ENCODE measurements at regions of chr6 and their contacts with region 1.

Region 1: DNA sequence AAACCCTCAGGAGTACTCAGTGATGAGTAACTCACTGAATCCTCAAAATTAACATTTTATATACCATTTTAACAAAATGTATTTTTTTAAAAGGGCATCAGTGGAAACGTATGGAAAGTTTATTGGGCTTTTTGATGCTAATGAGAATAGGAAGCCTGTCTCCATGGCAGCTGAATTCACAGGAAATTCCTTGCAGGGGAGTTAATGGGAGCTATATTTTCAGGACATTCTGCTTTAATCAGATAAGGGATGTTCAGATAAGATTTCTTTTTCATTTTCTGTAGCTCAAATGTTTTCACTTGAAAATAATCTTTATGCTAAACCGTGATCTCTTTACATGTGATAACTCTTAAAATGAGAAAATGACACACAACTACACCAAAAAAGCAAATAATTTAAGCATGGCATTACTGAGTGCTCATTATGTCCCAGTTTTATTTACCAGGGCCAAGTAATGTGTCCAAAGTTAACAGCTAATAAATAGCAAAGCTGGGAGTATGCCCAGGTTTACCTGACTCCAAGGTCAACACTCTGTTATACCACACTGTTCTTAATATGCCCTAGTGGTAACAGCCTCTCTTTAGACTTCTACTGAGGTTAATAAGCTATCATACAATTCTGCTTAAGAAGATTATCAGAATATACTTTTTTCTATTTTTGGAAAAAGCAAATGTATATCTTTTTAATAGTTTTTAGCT is 348.1 kb downstream of the GRIK2 start:
- DNase-seq: peak; percentile 68
- H3K4me3 ChIP-seq: no peak overlapping the region
- H3K27ac ChIP-seq: peak overlapping the region; percentile 26
- H3K4me1 ChIP-seq: peaks cover 8% of the 10 kb centered on the region
- H3K27me3 ChIP-seq: no peaks in the 10 kb centered on the region
- CTCF ChIP-seq: no peak
- POLR2A ChIP-seq: no peak

Region 2: GRCh38 chr6:101266063-101266462 is 475.6 kb before region 1 on chr6:
- CTCF ChIA-PET with region 1: no interaction called
- POLR2A ChIA-PET with region 1: no interaction called
- dilution Hi-C with region 1: no loop called
- intact Hi-C with region 1: no loop called
- DNase-seq: no peak
- H3K4me3 ChIP-seq: no peak overlapping the region
- H3K27ac ChIP-seq: no peak overlapping the region
- H3K4me1 ChIP-seq: no peaks in the 10 kb centered on the region
- H3K27me3 ChIP-seq: no peaks in the 10 kb centered on the region
- CTCF ChIP-seq: no peak
- POLR2A ChIP-seq: no peak

Region 3: GRCh38 chr6:101722991-101723579 is 18.5 kb before region 1 on chr6:
- CTCF ChIA-PET with region 1: no interaction called
- POLR2A ChIA-PET with region 1: no interaction called
- dilution Hi-C with region 1: no loop called
- intact Hi-C with region 1: loop called (anchors 2 kb)
- DNase-seq: peak; percentile 61
- H3K4me3 ChIP-seq: no peak overlapping the region
- H3K27ac ChIP-seq: peak overlapping the region; percentile 63
- H3K4me1 ChIP-seq: peaks cover 10% of the 10 kb centered on the region
- H3K27me3 ChIP-seq: no peaks in the 10 kb centered on the region
- CTCF ChIP-seq: no peak
- POLR2A ChIP-seq: no peak

Region 4: DNA sequence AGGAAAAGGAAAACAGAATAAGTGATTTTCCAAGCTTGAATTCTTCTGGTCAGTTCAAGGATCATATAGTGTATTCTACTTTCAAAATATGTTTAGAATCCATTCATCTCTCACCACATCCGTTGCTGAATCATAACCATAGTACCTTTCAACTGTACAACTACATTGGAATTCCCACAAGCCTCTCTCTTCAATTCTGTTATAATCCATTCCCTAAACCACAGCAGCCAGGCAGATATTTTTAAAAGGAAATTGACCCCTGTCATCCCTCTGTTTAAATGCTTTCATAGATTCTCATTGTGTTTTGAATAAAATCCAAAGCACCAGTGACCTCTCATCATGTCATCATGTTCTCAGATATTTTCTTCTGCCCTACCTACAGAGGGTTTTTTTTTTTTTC is 64.6 kb after region 1 on chr6:
- CTCF ChIA-PET with region 1: no interaction called
- POLR2A ChIA-PET with region 1: no interaction called
- dilution Hi-C with region 1: no loop called
- intact Hi-C with region 1: loop called (anchors 1 kb)
- DNase-seq: peak; percentile 43
- H3K4me3 ChIP-seq: no peak overlapping the region
- H3K27ac ChIP-seq: no peak overlapping the region
- H3K4me1 ChIP-seq: peaks cover 6% of the 10 kb centered on the region
- H3K27me3 ChIP-seq: no peaks in the 10 kb centered on the region
- CTCF ChIP-seq: no peak
- POLR2A ChIP-seq: no peak

Measured in endothelial cell of umbilical vein (primary cell).